AG04450 (cell line): ENCODE measurements at regions of chr7 and their contacts with region 1.

Region 1: DNA sequence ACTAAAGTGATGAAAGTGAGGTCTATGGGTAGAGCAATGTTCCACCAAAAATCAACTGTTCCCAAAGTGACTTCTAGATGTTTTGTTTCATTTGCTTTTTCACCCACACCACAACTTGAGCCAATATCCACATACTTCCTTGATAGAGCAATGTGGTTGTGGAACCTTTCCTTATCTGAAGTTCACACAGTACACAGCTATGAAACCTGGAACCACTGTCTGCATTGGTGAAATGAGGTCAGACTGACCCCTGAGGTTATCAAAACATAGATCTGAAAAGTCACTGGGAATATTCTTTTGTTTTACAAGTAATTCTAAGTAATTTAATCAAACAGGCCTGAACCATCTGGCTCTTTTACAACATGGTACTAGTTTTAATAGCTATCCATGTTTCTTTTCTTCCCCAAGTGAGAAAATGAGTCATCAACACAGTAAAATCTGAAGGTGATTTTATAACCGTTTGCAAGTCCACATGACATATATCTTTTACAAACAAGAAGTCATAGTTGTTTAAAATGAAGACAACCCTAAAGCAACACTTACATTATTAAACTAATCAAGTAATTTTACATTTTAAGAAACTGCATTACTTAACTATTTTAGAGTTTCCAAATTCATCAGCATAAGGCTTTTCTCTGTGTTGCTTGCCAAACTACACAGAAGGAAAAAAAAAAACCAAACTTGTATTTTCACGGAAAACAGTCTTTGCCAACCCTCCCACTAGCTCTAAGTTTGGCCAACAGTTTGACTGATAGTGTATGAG is 80.3 kb downstream of the LRRC17 start:
- DNase-seq: peak; percentile 79
- H3K4me3 ChIP-seq: no peak overlapping the region
- H3K27ac ChIP-seq: peak overlapping the region; percentile 77
- H3K27me3 ChIP-seq: no peaks in the 10 kb centered on the region
- CTCF ChIP-seq: no peak

Region 2: DNA sequence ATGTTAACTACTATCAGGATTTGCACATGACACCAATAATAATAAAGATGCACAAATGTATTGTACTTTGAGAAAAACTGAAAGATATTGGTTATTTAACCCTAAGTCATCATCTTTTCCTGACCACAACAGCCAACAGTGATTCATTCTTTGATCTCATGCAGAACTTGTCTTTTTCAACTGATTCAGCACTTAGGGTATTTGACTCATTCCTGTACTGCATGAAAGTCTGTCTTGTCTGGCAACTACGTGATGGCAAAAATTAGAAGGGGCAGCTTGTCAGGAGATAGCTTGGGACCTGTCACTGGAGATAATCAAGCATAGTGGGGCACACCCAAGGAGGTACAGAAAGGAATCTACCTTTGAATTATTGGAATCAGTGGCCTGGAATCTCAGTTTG is 158.1 kb before region 1 on chr7:
- CTCF ChIA-PET with region 1: no interaction called
- POLR2A ChIA-PET with region 1: interaction called, 11 read pairs
- DNase-seq: peak; percentile 38
- H3K4me3 ChIP-seq: no peak overlapping the region
- H3K27ac ChIP-seq: no peak overlapping the region
- H3K27me3 ChIP-seq: no peaks in the 10 kb centered on the region
- CTCF ChIP-seq: no peak